Activated CD4-positive, alpha-beta T cell treated with anti-CD3 and anti-CD28 coated beads, Interleukin-2, amount 10 ng/mL, durations not matched to agents 7 days and 5 days (primary cell): ENCODE measurements at regions of chr1 and their contacts with region 1.

Region 1: GRCh38 chr1:185170291-185170848 is 13.4 kb downstream of the SWT1 start:
- DNase-seq: peak; percentile 64
- H3K4me3 Mint-ChIP-seq: no peak overlapping the region
- H3K27ac Mint-ChIP-seq: peak overlapping the region; percentile 19
- H3K4me1 Mint-ChIP-seq: peaks cover 13% of the 10 kb centered on the region
- H3K27me3 Mint-ChIP-seq: no peaks in the 10 kb centered on the region

Region 2: DNA sequence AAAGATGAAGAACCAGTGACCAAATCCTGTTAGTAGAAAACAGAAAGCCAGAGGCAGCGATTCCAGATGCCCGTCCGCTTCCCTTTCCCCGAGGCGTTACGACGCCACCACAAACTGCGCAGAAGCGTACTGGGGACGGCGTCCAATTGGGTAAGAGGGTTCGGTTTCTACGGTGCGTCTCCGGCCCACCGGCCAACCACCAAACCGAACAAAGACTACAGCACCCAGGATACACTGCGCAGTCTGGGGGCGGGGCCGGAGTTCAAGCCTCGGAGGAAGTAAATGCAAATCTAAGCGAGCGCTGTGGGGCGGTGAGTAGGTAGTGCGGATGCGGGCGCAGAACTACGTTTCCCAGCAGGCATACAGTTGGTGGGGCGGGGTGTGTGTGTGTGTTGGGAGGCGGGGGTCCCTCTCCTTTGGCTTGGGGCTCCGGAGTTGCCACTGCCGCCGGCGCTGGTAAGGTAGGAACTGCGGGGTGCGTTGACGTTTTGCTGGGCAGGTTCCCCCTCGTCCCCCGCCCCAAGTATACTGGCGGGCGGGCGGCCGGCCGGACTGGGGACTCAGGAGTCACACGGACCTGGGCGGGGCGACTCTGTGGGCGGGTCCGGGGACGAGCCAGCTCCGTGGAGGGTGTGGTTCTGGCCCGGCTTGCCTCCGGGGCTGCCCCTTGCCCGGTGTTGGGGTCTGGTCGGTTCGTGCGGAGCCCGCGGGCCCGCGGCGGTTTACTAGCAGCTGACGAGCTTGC is 13.3 kb before region 1 on chr1 and contains the starts of genes SWT1 and TRMT1L:
- CTCF ChIA-PET with region 1: interaction called, 20 read pairs
- POLR2A ChIA-PET with region 1: no interaction called
- DNase-seq: peak; percentile 99
- H3K4me3 Mint-ChIP-seq: peak within 1 kb of the TSS; percentile 99
- H3K27ac Mint-ChIP-seq: peak within 1 kb of the TSS; percentile 99
- H3K4me1 Mint-ChIP-seq: peaks cover 57% of the 10 kb centered on the region
- H3K27me3 Mint-ChIP-seq: no peaks in the 10 kb centered on the region
- total RNA-seq, gene SWT1: 3.7 to 3.9 TPM
- total RNA-seq, gene TRMT1L: 20.3 to 21.1 TPM

Region 3: DNA sequence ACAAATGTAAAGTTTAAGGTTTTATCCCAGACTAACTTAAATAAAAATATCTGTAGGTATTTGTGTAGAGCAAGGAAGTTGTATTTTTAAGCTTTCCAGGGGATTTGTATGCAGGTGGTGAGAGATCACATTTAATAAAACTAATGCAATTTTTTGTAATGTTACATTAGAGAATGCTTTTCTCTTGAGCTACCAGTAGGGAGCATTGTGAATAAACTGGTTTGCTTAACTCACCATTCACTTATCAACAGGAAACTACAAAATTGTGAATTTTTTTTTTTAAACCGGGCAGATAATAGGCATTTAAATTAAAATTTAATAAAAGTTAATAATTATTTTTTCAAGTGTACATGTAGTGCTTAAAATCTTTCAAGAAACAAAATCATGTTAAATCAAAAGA is 68.1 kb after region 1 on chr1:
- CTCF ChIA-PET with region 1: no interaction called
- POLR2A ChIA-PET with region 1: no interaction called
- DNase-seq: no peak
- H3K4me3 Mint-ChIP-seq: no peak overlapping the region
- H3K27ac Mint-ChIP-seq: no peak overlapping the region
- H3K4me1 Mint-ChIP-seq: peaks cover 16% of the 10 kb centered on the region
- H3K27me3 Mint-ChIP-seq: no peaks in the 10 kb centered on the region

Region 4: DNA sequence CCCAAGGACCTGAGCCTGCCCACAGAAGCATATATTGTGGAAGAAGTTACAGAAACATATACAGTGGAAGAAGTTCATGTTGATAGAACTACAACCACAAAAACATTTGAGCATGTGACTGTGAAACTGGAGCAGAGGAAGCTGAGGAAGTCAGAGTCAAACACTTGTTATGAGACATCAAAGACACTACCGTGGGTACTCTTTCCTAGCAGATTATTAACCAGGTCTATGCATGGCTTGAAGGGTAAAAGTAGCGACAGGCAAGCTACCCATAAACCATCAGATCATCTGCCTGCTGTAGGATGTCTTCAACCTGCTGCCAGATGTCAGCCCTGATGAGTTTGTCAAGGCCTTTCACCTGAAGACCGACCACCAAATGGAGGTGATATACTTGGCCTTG is 110.9 kb after region 1 on chr1:
- CTCF ChIA-PET with region 1: no interaction called
- POLR2A ChIA-PET with region 1: no interaction called
- DNase-seq: peak; percentile 42
- H3K4me3 Mint-ChIP-seq: peak overlapping the region; percentile 25
- H3K27ac Mint-ChIP-seq: peak overlapping the region; percentile 88
- H3K4me1 Mint-ChIP-seq: peaks cover 32% of the 10 kb centered on the region
- H3K27me3 Mint-ChIP-seq: no peaks in the 10 kb centered on the region